ENCODE measurements at regions of chr19 and their contacts with region 1.

Region 1: GRCh38 chr19:18117692-18118378 is 20.3 kb downstream of the MAST3 start:
- DNase-seq: peak; percentile 68 to 96
- H3K4me3 ChIP-seq: peak overlapping the region; percentile 45
- CTCF ChIP-seq: no peak
- POLR2A ChIP-seq: no peak

Region 2: GRCh38 chr19:18058208-18059030 is 59.4 kb before region 1 on chr19:
- intact Hi-C with region 1: no loop called
- DNase-seq: peak; percentile 66 to 97
- H3K4me3 ChIP-seq: no peak overlapping the region
- CTCF ChIP-seq: peak in 1 of 3 donors; percentile 95
- POLR2A ChIP-seq: no peak

Region 3: DNA sequence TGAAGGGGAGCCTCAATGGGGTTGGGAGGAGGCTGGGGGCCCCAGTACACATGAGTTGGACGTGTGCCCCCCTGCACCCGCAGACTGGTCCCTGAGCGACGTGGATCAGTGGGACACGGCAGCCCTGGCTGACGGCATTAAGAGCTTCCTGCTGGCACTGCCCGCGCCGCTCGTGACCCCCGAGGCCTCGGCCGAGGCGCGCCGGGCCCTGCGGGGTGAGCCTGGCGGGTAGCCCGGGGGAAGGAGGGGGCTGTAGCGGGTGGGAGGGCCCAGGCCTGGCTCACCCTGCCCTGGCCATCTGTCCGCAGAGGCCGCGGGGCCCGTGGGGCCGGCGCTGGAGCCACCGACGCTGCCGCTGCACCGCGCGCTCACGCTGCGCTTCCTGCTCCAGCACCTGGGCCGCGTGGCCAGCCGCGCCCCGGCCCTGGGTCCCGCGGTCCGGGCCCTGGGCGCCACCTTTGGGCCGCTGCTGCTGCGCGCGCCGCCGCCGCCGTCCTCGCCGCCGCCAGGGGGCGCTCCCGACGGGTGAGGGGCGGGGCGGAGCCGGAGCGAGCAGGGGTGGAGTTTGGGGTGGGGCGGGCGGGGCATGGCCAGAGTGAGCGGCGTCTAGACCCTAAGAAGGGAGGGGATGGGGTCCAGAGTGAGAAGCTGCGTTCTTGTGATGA is 43.3 kb after region 1 on chr19:
- intact Hi-C with region 1: loop called (anchors 10 kb)
- DNase-seq: peak in 1 of 2 donors; percentile 94
- H3K4me3 ChIP-seq: no peak overlapping the region
- CTCF ChIP-seq: no peak
- POLR2A ChIP-seq: no peak

Measured in lower leg skin (tissue), 4 donors.